ENCODE measurements at regions of chr1 and their contacts with region 1.

Region 1: GRCh38 chr1:2205191-2205952 is 10.8 kb upstream of the FAAP20 start:
- DNase-seq: peak; percentile 93
- H3K4me3 ChIP-seq: peak overlapping the region; percentile 65
- H3K27ac ChIP-seq: no peak overlapping the region
- H3K4me1 ChIP-seq: peaks cover 15% of the 10 kb centered on the region
- CTCF ChIP-seq: no peak

Region 2: GRCh38 chr1:2259668-2260402 is 54.5 kb after region 1 on chr1:
- CTCF ChIA-PET with region 1: no interaction called
- POLR2A ChIA-PET with region 1: no interaction called
- intact Hi-C with region 1: loop called (anchors 2 kb)
- DNase-seq: no peak
- H3K4me3 ChIP-seq: no peak overlapping the region
- H3K27ac ChIP-seq: peak overlapping the region; percentile 51
- H3K4me1 ChIP-seq: peaks cover 47% of the 10 kb centered on the region
- CTCF ChIP-seq: no peak

Region 3: DNA sequence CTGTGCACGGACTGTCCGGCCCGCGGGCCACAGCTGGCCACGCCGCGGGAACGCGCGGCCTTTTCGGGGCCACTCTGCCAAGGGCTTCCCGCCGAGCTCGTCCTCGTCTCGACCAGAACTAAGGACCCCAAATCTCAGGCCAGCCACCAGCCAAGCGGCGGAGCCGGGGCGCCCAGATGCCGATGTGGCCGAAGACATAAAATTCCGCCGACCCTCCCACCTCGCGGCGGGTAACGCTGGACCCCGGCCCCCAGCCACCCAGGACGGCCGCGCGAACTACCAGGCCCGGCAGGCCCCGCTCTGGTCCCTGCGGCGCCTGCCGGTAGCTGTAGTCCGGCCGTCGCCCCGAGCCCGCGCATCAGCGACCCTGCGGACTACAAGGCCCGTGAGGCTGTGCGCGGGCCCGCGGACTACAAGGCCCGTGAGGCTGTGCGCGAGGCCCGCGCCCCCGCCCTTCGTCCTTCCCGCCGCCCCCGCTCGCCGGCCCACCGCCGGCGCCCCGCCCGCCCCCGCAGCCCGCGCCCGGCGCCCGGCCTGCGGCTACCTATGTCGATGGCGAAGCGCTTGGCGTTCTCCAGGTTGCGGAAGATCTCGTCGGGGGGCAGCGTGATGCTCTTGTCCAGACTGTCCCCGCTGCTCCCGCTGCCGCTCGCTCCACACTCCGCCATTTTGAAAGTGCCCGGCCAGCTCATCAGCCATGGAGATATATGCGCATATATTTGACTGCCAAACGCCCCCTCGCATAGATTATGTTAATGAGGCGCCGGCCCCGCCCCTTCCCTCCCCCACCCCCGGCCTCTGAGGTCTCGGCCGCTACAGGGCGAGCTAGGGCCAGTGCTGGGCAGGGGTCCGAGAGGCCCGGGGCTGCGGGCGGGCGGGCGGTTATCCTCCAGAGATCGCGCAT is 320.8 kb after region 1 on chr1 and contains the start of gene PANK4:
- CTCF ChIA-PET with region 1: no interaction called
- POLR2A ChIA-PET with region 1: no interaction called
- intact Hi-C with region 1: no loop called
- DNase-seq: peak; percentile 96
- H3K4me3 ChIP-seq: peak within 1 kb of the TSS; percentile 100
- H3K27ac ChIP-seq: peak within 1 kb of the TSS; percentile 38
- H3K4me1 ChIP-seq: peaks cover 26% of the 10 kb centered on the region
- CTCF ChIP-seq: no peak
- total RNA-seq, gene PANK4: 43.6 and 55.9 TPM in 2 replicates

Measured in OCI-LY7 (cell line).